ENCODE measurements at regions of chr2 and their contacts with region 1.

Region 1: DNA sequence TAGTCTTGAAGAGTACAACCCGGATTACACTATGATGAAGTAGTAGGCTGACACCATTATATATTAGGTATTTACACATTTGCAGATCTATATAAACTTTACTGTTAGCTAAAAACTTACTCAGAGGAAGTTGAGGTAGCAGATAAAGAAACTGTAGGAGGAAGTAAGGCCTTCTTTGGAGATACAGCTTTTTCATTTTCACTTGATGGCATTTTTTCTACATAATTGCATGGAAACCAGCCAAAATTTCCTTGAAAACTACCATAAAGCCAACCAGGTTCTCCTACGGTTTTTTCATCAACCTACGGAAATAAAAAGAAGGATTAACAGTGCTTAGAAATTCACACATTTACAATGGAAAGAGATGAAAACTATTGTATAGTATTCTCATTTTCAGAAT is 86.6 kb downstream of the FAM228A start:
- DNase-seq: no peak
- H3K4me3 ChIP-seq: no peak overlapping the region
- H3K27ac ChIP-seq: no peak overlapping the region
- H3K4me1 ChIP-seq: no peaks in the 10 kb centered on the region
- H3K27me3 ChIP-seq: no peaks in the 10 kb centered on the region
- CTCF ChIP-seq: no peak

Region 2: DNA sequence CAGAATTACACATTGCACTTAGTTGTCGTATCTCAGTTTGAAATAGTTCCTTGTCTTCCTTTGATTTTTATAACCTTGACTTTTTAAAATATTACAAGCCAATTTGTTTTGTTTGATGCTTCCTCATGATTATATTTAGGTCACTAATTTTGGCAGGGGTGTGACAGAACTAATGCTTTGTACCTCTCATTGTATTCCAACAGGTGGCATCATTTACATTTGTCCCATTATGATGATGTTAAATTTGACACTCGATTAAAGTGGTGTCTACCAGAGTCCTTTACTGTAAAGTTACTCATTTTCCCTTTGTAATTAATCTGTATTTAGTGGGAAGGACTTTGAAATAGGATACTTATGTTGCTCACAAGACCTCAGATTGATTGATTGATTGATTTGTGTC is 273.1 kb before region 1 on chr2:
- CTCF ChIA-PET with region 1: no interaction called
- POLR2A ChIA-PET with region 1: interaction called, 11 read pairs
- intact Hi-C with region 1: no loop called
- DNase-seq: peak; percentile 32
- H3K4me3 ChIP-seq: no peak overlapping the region
- H3K27ac ChIP-seq: no peak overlapping the region
- H3K4me1 ChIP-seq: peaks cover 5% of the 10 kb centered on the region
- H3K27me3 ChIP-seq: no peaks in the 10 kb centered on the region
- CTCF ChIP-seq: peak; percentile 30; the same call in 1 of the 2 replicates

Region 3: DNA sequence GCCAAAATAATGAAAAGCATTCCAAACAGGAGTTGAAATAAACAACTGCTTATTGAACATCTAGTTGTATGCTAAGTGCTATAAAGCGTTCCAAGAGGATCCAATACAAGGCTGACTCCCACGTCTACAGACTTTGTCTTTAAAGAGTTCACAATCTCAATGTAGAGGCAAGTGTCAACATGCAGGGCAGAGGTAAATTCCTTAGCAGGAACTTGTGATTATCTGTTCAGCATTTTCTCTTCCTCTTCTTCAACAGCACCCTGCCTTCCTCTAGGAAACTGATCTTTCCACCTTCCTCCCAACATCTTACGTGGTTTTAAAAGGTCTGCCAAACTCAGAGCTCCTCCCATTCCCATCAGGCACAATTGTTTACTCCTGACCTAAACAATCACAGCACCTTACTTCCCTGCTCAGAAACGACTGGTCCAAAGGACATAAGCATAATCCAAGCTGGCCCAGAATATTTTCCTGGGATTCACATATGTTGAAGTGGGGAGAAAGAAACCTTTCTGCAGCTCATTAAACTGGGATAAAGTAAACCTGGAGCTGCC is 15.0 kb after region 1 on chr2:
- CTCF ChIA-PET with region 1: no interaction called
- POLR2A ChIA-PET with region 1: no interaction called
- intact Hi-C with region 1: no loop called
- DNase-seq: no peak
- H3K4me3 ChIP-seq: no peak overlapping the region
- H3K27ac ChIP-seq: no peak overlapping the region
- H3K4me1 ChIP-seq: no peaks in the 10 kb centered on the region
- H3K27me3 ChIP-seq: no peaks in the 10 kb centered on the region
- CTCF ChIP-seq: no peak

Region 4: GRCh38 chr2:24343225-24343882 is 81.9 kb after region 1 on chr2:
- CTCF ChIA-PET with region 1: no interaction called
- POLR2A ChIA-PET with region 1: no interaction called
- intact Hi-C with region 1: no loop called
- DNase-seq: no peak
- H3K4me3 ChIP-seq: no peak overlapping the region
- H3K27ac ChIP-seq: no peak overlapping the region
- H3K4me1 ChIP-seq: peaks cover 2% of the 10 kb centered on the region
- H3K27me3 ChIP-seq: no peaks in the 10 kb centered on the region
- CTCF ChIP-seq: no peak